A549 (cell line): ENCODE measurements at regions of chr2 and their contacts with region 1.

Region 1: GRCh38 chr2:70570041-70570663 is 16.5 kb upstream of the TGFA start:
- DNase-seq: peak; percentile 66 to 71
- ATAC-seq: peak; percentile 82 to 86
- H3K4me3 ChIP-seq: no peak overlapping the region
- H3K27ac ChIP-seq: peak overlapping the region in 1 of 2 experiments; percentile 42; a peak in 3 of 6 replicates
- H3K4me1 ChIP-seq: peaks cover 8% of the 10 kb centered on the region; the same call in 2 of the 3 replicates
- CTCF ChIP-seq: no peak
- EP300 ChIP-seq: no peak
- POLR2A ChIP-seq: no peak
- RAD21 ChIP-seq: no peak

Region 2: GRCh38 chr2:70553584-70554337 is 16.4 kb before region 1 on chr2 and contains the start of gene TGFA:
- CTCF ChIA-PET with region 1: interaction called, 10 read pairs
- POLR2A ChIA-PET with region 1: no interaction called
- DNase-seq: peak; percentile 68 to 82
- ATAC-seq: peak; percentile 87 to 93
- H3K4me3 ChIP-seq: peak within 1 kb of the TSS; percentile 59
- H3K27ac ChIP-seq: peak within 1 kb of the TSS; percentile 75 to 86
- H3K4me1 ChIP-seq: peaks cover 12% of the 10 kb centered on the region; the same call in 2 of the 3 replicates
- CTCF ChIP-seq: peak; percentile 65
- EP300 ChIP-seq: peak in 1 of 2 experiments; percentile 9; a peak in 1 of 5 replicates
- POLR2A ChIP-seq: peak; percentile 51
- RAD21 ChIP-seq: peak; percentile 52 to 66
- polyA plus RNA-seq, gene TGFA: 3.5 and 3.6 TPM in 2 replicates